Mammary epithelial cell (primary cell): ENCODE measurements at regions of chr1 and their contacts with region 1.

Region 1: GRCh38 chr1:197225611-197226010 is 42.4 kb upstream of the CRB1 start:
- DNase-seq: no peak
- H3K4me3 ChIP-seq: no peak overlapping the region
- H3K27ac ChIP-seq: no peak overlapping the region
- H3K4me1 ChIP-seq: peaks cover 7% of the 10 kb centered on the region
- H3K27me3 ChIP-seq: no peaks in the 10 kb centered on the region
- CTCF ChIP-seq: no peak

Region 2: DNA sequence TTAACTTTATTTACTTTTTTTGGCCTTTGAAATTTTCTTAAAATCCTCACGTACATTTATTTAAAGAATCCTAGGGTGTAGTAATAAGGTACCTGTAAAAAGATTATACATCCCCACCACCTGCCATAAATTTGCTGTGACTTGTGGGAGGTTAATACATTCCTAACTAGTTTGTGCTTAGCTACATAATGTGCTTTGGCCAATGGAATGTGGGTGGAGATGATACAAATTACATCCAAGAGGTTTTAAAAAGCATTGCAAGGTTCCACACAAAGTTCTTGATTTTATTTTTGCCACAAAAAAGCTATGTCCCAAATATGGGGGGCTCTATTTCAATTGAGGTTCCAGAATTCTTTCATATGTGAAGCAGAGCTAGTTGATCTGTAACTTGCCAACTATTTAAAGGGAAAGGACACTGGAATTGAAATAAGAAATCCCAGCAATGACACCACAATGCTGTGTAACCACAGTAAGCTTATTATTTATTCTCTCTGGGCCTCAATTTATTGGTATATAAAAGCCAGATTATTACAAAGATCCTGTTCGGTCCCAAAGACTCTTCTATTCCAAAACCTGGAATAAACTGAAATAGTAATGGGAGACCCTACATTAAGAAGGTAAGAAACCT is 94.8 kb before region 1 on chr1:
- CTCF ChIA-PET with region 1: no interaction called
- dilution Hi-C with region 1: loop called (anchors 5 kb)
- in situ Hi-C with region 1: no loop called
- intact Hi-C with region 1: no loop called
- DNase-seq: peak; percentile 24
- H3K4me3 ChIP-seq: no peak overlapping the region
- H3K27ac ChIP-seq: peak overlapping the region; percentile 70
- H3K4me1 ChIP-seq: peaks cover 12% of the 10 kb centered on the region
- H3K27me3 ChIP-seq: no peaks in the 10 kb centered on the region
- CTCF ChIP-seq: no peak